ENCODE measurements at regions of chr18 and their contacts with region 1.

Region 1: GRCh38 chr18:63161761-63162195 is 157.8 kb downstream of the BCL2 start:
- DNase-seq: peak; percentile 70 to 80
- ATAC-seq: peak; percentile 89 to 92
- H3K4me3 ChIP-seq: no peak overlapping the region
- H3K27ac ChIP-seq: peak overlapping the region; percentile 65 to 77 (median 74)
- H3K4me1 ChIP-seq: peaks cover 31 to 36% of the 10 kb centered on the region in 2 donors
- H3K27me3 ChIP-seq: no peaks in the 10 kb centered on the region
- CTCF ChIP-seq: no peak
- POLR2A ChIP-seq: peak; percentile 9 to 51

Region 2: GRCh38 chr18:62729487-62730386 is 432.0 kb before region 1 on chr18:
- in situ Hi-C with region 1: no loop called
- intact Hi-C with region 1: no loop called
- DNase-seq: no peak
- ATAC-seq: no peak
- H3K4me3 ChIP-seq: no peak overlapping the region
- H3K27ac ChIP-seq: no peak overlapping the region
- H3K4me1 ChIP-seq: peaks cover 0 to 4% of the 10 kb centered on the region in 2 donors
- H3K27me3 ChIP-seq: no peaks in the 10 kb centered on the region
- CTCF ChIP-seq: no peak
- POLR2A ChIP-seq: no peak

Region 3: DNA sequence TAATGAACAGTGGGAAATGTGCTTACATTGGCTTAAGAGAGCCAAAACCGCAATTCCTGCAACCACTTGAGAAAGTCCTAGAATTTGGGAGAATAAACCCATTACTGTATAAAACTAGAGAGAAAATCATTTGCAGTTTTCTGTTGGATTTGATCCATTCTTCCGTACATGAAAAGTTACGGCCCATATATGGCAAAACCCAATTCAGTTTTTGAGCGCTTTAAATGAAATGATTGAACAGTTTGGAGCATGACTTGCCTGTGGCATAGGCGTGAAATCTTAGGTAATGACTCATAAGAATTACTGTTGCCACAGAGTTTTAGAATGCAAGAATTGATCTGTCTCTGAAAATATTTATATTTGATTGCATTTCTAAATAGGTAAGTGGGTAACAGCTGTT is 394.5 kb before region 1 on chr18:
- in situ Hi-C with region 1: no loop called
- intact Hi-C with region 1: no loop called
- DNase-seq: no peak
- ATAC-seq: no peak
- H3K4me3 ChIP-seq: no peak overlapping the region
- H3K27ac ChIP-seq: no peak overlapping the region
- H3K4me1 ChIP-seq: peaks cover 16 to 17% of the 10 kb centered on the region in 2 donors
- H3K27me3 ChIP-seq: no peaks in the 10 kb centered on the region
- CTCF ChIP-seq: no peak
- POLR2A ChIP-seq: no peak

Region 4: DNA sequence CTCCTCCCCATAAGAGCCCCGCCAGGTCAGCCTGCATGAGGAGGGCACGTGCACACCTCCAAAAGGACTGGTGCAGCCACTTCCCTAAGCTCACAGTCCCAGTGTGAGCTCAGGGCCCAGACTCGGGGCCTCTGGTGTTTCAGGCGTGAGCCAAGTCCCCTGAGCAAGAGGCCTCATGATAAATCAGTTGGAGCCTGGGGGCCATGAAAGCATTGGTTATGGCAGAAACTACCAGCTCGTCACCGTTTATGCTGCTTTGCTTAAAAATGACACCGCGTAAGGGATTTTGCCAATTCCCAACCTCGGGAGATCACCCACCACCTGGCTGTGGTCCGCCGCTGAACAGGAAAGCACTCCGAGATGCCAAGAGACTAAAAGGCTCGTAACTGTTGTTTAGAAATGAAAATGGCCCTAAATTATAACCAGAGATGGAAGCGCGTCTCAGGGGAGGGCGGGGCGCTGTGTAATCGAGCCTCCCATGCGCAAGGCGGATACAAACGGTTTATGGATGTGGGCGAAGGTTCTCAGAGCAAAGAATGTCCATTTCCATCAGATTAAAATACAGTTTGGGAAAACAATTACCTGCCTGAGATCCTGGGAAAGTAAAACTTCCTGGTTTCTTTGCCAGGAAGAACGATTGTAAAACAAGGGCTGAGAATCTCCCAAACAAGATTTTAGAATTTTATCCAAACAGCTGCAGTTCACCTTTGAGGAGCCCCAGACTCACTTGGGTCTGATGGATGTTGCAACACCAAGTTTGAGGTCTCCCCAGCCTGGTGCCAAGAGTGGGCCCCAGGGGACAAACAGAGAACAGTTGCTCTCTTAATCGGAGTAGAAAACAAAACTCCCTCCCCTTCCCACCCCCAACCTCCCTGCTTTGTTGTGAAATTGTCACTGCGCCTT is 16.4 kb after region 1 on chr18:
- in situ Hi-C with region 1: no loop called
- intact Hi-C with region 1: loop called (anchors 2 kb)
- DNase-seq: peak; percentile 69 to 82
- ATAC-seq: peak; percentile 68 to 76
- H3K4me3 ChIP-seq: peak overlapping the region; percentile 39 to 52 (median 47)
- H3K27ac ChIP-seq: peak overlapping the region; percentile 65 to 82 (median 72)
- H3K4me1 ChIP-seq: peaks cover 37 to 43% of the 10 kb centered on the region in 2 donors
- H3K27me3 ChIP-seq: no peaks in the 10 kb centered on the region
- CTCF ChIP-seq: no peak
- POLR2A ChIP-seq: no peak

Region 5: DNA sequence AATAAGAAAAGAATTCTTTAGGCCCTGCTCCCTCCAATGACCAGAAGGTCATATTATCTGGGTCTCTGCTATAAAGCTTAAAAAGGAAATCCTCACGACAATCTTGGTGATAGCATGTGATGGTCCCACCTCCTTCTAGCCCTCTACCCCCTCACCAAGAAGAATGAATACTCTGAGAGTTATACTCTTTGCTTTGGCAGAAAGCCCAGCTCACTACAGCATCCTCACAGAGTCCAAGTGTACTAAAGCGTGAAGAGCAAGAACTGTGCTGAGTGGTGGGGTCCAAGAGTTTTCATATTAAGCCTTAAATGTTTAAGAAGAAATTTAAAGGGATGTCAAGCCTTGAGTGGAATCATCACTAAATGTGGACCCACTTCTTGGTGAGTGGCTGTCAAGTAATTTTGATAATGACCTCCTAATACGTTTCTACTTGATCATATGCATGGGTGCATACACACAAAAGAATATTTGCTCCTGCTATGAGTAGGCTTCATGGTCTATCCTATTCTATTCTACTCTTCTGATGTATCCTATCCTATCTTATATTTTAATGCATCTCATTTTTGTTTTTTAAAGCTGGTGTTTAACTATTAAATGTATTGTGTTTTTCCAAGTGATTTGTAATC is 597.0 kb after region 1 on chr18:
- in situ Hi-C with region 1: no loop called
- intact Hi-C with region 1: no loop called
- DNase-seq: no peak
- ATAC-seq: no peak
- H3K4me3 ChIP-seq: no peak overlapping the region
- H3K27ac ChIP-seq: no peak overlapping the region
- H3K4me1 ChIP-seq: no peaks in the 10 kb centered on the region
- H3K27me3 ChIP-seq: no peaks in the 10 kb centered on the region
- CTCF ChIP-seq: no peak
- POLR2A ChIP-seq: no peak

Measured in gastrocnemius medialis (tissue), 4 donors.